ENCODE measurements at regions of chr19 and their contacts with region 1.

Region 1: DNA sequence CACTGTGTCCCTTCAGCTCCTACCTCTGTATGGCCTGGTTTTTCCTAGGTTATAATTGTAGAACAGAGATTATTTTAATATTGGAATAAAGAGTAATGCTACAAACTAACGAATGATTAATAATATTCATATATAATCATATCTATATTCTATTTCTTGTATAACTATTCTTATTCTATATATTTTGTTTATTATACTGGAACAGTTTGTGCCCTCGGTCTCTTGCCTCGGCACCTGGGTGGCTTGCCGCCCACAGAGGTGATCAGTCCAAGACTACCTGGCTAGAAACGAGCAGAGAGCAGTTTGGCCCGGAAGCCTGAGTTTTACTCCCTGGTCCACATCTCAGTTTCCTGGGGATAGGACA is 3.9 kb upstream of the SLC27A1 start:
- DNase-seq: no peak
- H3K4me3 ChIP-seq: 0 out of 4 replicates have a peak overlapping the region, but pooled peaks of 1 of the 2 experiments have one; percentile 20
- H3K27ac ChIP-seq: no peak overlapping the region
- H3K4me1 ChIP-seq: peaks cover 6 to 13% of the 10 kb centered on the region in 2 experiments; a peak in 3 of 4 replicates
- H3K27me3 ChIP-seq: peaks cover 9% of the 10 kb centered on the region; the same call in 1 of the 2 replicates
- CTCF ChIP-seq: no peak
- EP300 ChIP-seq: no peak
- RAD21 ChIP-seq: no peak

Region 2: DNA sequence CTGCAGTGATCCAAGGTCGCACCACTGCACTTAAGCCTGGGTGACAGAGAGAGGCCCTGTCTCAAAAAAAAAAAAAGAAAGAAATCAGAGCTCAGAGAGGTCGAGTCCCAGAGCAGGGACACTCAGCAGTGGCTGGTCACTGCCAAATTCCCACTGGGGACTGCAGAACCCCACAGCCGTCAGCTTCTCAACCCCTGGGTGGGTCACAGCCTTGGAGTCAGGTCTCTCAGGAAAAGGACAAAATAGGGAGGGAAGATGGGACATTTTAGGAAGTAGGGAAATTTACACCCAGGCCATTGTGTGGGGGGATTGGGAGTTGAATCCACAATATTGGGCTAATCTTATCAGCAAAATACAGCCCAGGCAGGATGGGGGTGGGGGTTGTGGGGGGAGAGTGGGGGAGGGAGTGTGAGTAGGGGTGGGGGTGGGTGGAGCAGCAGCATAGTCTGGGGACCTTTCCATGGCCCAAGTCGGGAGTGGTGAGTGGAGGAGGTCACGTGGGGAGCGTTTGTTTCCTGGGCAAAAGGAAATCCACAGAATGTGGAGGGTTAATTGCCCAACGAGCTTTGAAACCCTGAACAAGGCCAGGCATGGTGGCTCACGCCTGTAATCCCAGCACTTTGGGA is 67.5 kb before region 1 on chr19:
- CTCF ChIA-PET with region 1: interaction called, 11 read pairs
- POLR2A ChIA-PET with region 1: no interaction called
- DNase-seq: peak; percentile 22
- H3K4me3 ChIP-seq: no peak overlapping the region
- H3K27ac ChIP-seq: no peak overlapping the region
- H3K4me1 ChIP-seq: peaks cover 0 to 5% of the 10 kb centered on the region in 2 experiments; a peak in 1 of 4 replicates
- H3K27me3 ChIP-seq: no peaks in the 10 kb centered on the region
- CTCF ChIP-seq: no peak
- EP300 ChIP-seq: no peak
- RAD21 ChIP-seq: no peak

Region 3: DNA sequence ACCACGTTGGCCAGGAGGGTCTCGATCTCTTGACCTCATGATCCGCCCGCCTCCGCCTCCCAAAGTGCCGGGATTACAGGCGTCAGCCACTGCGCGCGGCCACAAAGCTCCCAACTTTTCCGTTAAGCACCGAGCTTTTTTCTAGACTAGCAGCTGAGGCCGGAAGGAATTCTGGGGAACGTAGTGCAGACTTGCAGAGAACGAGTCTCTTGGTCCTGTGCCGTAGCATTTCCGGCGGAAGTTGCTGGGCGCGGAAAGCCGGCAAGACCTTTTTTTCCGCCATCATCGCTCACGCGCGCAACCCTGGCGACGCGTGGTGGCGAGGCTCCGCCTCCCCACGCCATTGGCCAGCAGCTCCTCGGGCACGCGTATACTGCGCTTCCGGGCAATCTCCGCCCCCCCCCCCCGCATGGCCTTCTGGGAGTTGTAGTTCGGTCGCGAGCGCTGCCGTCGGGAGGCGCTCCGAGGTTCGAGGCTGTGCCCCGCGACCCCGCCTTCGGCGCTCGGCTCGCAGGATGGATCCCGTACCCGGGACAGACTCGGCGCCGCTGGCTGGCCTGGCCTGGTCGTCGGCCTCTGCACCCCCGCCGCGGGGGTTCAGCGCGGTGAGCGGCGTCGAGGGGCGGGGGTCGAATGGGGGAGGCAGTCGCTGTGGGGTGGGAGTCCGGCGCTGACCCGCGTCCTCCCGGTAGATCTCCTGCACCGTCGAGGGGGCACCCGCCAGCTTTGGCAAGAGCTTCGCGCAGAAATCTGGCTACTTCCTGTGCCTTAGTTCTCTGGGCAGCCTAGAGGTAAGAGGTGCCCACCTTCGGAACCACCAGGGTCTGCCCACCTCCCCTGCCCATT is 46.6 kb before region 1 on chr19 and contains the start of gene MVB12A:
- CTCF ChIA-PET with region 1: interaction called, 11 read pairs
- POLR2A ChIA-PET with region 1: interaction called, 4 read pairs
- DNase-seq: peak; percentile 97
- H3K4me3 ChIP-seq: peak within 1 kb of the TSS; percentile 75 to 78
- H3K27ac ChIP-seq: peak within 1 kb of the TSS; percentile 60 to 76
- H3K4me1 ChIP-seq: peaks cover 0 to 8% of the 10 kb centered on the region in 2 experiments; a peak in 1 of 4 replicates
- H3K27me3 ChIP-seq: no peaks in the 10 kb centered on the region
- CTCF ChIP-seq: no peak
- EP300 ChIP-seq: no peak
- RAD21 ChIP-seq: no peak
- polyA plus RNA-seq, gene MVB12A: 63.0 and 63.9 TPM in 2 replicates

Region 4: DNA sequence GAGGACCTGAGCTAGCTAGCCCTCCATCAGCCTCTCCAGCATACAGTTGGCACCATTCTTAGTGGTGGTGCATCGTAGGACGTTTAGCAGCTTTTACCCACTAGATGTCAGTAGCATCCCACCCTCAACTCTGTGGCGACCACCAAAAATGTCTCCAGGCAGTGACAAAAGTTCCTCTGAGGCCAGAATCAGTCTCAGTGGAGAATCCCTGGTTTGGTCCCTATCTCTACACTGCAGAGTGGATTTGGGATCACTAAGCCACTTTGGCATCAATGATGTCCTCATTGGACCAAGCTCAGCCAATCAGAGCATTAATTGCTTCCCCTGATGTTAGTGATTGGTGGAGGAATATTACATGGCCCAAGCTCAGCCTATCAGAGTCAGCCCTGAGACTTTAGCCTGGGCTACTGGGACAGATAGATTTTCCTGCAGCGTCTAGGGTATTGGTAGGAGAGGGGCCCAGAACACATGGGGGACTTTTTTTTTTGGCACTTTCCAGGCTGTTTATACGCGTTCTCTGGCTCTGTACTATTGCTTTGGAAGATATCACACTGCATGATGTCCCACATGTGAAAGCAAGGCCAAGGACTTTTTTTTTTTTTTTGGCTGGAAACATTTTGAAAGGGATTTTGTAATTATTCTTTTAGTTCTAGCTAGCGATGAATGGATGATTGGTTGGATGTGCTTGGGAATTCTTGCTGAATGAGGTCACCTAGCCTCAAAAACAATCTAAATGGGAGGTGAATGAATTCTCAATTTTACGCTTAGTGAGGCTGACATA is 25.0 kb before region 1 on chr19:
- CTCF ChIA-PET with region 1: interaction called, 22 read pairs
- POLR2A ChIA-PET with region 1: no interaction called
- DNase-seq: peak; percentile 68
- H3K4me3 ChIP-seq: no peak overlapping the region
- H3K27ac ChIP-seq: no peak overlapping the region
- H3K4me1 ChIP-seq: no peaks in the 10 kb centered on the region
- H3K27me3 ChIP-seq: no peaks in the 10 kb centered on the region
- CTCF ChIP-seq: peak; percentile 49
- EP300 ChIP-seq: no peak
- RAD21 ChIP-seq: peak; percentile 67

Region 5: GRCh38 chr19:17448131-17448967 is 18.1 kb before region 1 on chr19 and contains the start of gene TMEM221:
- CTCF ChIA-PET with region 1: interaction called, 16 read pairs
- POLR2A ChIA-PET with region 1: no interaction called
- DNase-seq: peak; percentile 86
- H3K4me3 ChIP-seq: peak within 1 kb of the TSS; percentile 41 to 50; a peak in 3 of 4 replicates
- H3K27ac ChIP-seq: no peak within 1 kb of the TSS
- H3K4me1 ChIP-seq: no peaks in the 10 kb centered on the region; a peak in 1 of 4 replicates
- H3K27me3 ChIP-seq: no peaks in the 10 kb centered on the region
- CTCF ChIP-seq: peak; percentile 65
- EP300 ChIP-seq: no peak
- RAD21 ChIP-seq: no peak
- polyA plus RNA-seq, gene TMEM221: 0.41 and 0.62 TPM in 2 replicates

Region 6: GRCh38 chr19:17454576-17455071 is 11.8 kb before region 1 on chr19:
- CTCF ChIA-PET with region 1: interaction called, 16 read pairs
- POLR2A ChIA-PET with region 1: no interaction called
- DNase-seq: peak; percentile 52
- H3K4me3 ChIP-seq: no peak overlapping the region
- H3K27ac ChIP-seq: no peak overlapping the region
- H3K4me1 ChIP-seq: no peaks in the 10 kb centered on the region; a peak in 1 of 4 replicates
- H3K27me3 ChIP-seq: peaks cover 28% of the 10 kb centered on the region
- CTCF ChIP-seq: no peak
- EP300 ChIP-seq: no peak
- RAD21 ChIP-seq: no peak

Region 7: GRCh38 chr19:17555480-17555928 is 89.0 kb after region 1 on chr19 and contains the start of gene COLGALT1:
- CTCF ChIA-PET with region 1: no interaction called
- POLR2A ChIA-PET with region 1: no interaction called
- DNase-seq: peak; percentile 99
- H3K4me3 ChIP-seq: peak within 1 kb of the TSS; percentile 76 to 93
- H3K27ac ChIP-seq: peak within 1 kb of the TSS; percentile 35 to 67; a peak in 3 of 4 replicates
- H3K4me1 ChIP-seq: peaks cover 0 to 7% of the 10 kb centered on the region in 2 experiments; a peak in 2 of 4 replicates
- H3K27me3 ChIP-seq: no peaks in the 10 kb centered on the region
- CTCF ChIP-seq: no peak
- EP300 ChIP-seq: no peak
- RAD21 ChIP-seq: no peak
- polyA plus RNA-seq, gene COLGALT1: 75.9 and 83.8 TPM in 2 replicates